Natural killer cell (primary cell): ENCODE measurements at regions of chr5 and their contacts with region 1.

Region 1: GRCh38 chr5:69189162-69190086 is at the start of gene CENPH:
- DNase-seq: peak; percentile 85 to 94
- ATAC-seq: peak; percentile 95 to 98 (median 97)
- H3K4me3 ChIP-seq: peak within 1 kb of the TSS; percentile 72
- H3K4me3 Mint-ChIP-seq: peak within 1 kb of the TSS; percentile 89
- H3K27ac ChIP-seq: peak within 1 kb of the TSS; percentile 65
- H3K27ac Mint-ChIP-seq: peak within 1 kb of the TSS; percentile 86 to 94
- H3K4me1 ChIP-seq: peaks cover 13% of the 10 kb centered on the region
- H3K4me1 Mint-ChIP-seq: peaks cover 10 to 14% of the 10 kb centered on the region in 2 donors
- H3K27me3 ChIP-seq: no peaks in the 10 kb centered on the region
- H3K27me3 Mint-ChIP-seq: no peaks in the 10 kb centered on the region
- CTCF ChIP-seq: no peak
- total RNA-seq, gene CENPH: 5.6 to 6.4 (median 5.6) TPM

Region 2: GRCh38 chr5:69217548-69218526 is 28.4 kb after region 1 on chr5:
- intact Hi-C with region 1: loop called (anchors 1 kb)
- DNase-seq: peak; percentile 92 to 97
- ATAC-seq: peak; percentile 91 to 99 (median 92)
- H3K4me3 ChIP-seq: peak overlapping the region; percentile 87
- H3K4me3 Mint-ChIP-seq: peak overlapping the region; percentile 100
- H3K27ac ChIP-seq: peak overlapping the region; percentile 83
- H3K27ac Mint-ChIP-seq: peak overlapping the region; percentile 98 to 99
- H3K4me1 ChIP-seq: peaks cover 4% of the 10 kb centered on the region
- H3K4me1 Mint-ChIP-seq: peaks cover 13 to 23% of the 10 kb centered on the region in 2 donors
- H3K27me3 ChIP-seq: no peaks in the 10 kb centered on the region
- H3K27me3 Mint-ChIP-seq: no peaks in the 10 kb centered on the region
- CTCF ChIP-seq: no peak

Region 3: DNA sequence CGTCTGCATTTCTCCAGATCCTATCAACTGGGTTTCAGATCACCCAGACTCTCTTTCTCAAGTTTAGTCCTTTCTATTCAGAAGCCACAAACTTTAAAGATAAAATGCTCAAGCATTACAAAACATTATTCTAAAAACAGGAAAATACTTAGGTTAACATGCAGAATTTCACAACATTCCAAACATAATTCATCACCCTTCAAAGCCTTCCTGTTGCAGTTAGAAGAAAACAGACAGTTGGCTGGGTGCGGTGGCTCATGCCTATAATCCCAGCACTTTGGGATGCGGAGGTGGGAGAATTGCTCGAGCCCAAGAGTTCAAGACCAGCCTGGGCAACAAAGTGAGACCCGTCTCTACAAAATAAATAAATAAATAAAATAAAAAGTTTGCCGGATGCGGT is 295.5 kb after region 1 on chr5:
- intact Hi-C with region 1: no loop called
- DNase-seq: no peak
- ATAC-seq: no peak
- H3K4me3 ChIP-seq: no peak overlapping the region
- H3K4me3 Mint-ChIP-seq: no peak overlapping the region
- H3K27ac ChIP-seq: no peak overlapping the region
- H3K27ac Mint-ChIP-seq: no peak overlapping the region
- H3K4me1 ChIP-seq: no peaks in the 10 kb centered on the region
- H3K4me1 Mint-ChIP-seq: no peaks in the 10 kb centered on the region
- H3K27me3 ChIP-seq: no peaks in the 10 kb centered on the region
- H3K27me3 Mint-ChIP-seq: peaks cover under 1 to 4% of the 10 kb centered on the region in 2 donors
- CTCF ChIP-seq: no peak